ENCODE measurements at regions of chr4 and their contacts with region 1.

Region 1: GRCh38 chr4:17810260-17811077 is at the starts of genes DCAF16 and NCAPG:
- DNase-seq: peak; percentile 98 to 99
- H3K4me3 ChIP-seq: peak within 1 kb of the TSS; percentile 92 to 97
- H3K27ac ChIP-seq: peak within 1 kb of the TSS; percentile 97
- H3K4me1 ChIP-seq: peaks cover 50% of the 10 kb centered on the region
- H3K27me3 ChIP-seq: no peaks in the 10 kb centered on the region
- CTCF ChIP-seq: no peak
- POLR2A ChIP-seq: peak; percentile 60 to 94
- total RNA-seq, gene DCAF16: 26.5 TPM
- total RNA-seq, gene NCAPG: 1.5 TPM

Region 2: GRCh38 chr4:17915439-17915838 is 105.0 kb after region 1 on chr4:
- intact Hi-C with region 1: no loop called
- DNase-seq: no peak
- H3K4me3 ChIP-seq: no peak overlapping the region
- H3K27ac ChIP-seq: no peak overlapping the region
- H3K4me1 ChIP-seq: no peaks in the 10 kb centered on the region
- H3K27me3 ChIP-seq: no peaks in the 10 kb centered on the region
- CTCF ChIP-seq: no peak
- POLR2A ChIP-seq: no peak

Region 3: GRCh38 chr4:18021722-18022571 is 211.5 kb after region 1 on chr4 and contains the start of gene LCORL:
- intact Hi-C with region 1: loop called (anchors 5 kb)
- DNase-seq: peak in 1 of 2 donors; percentile 97
- H3K4me3 ChIP-seq: peak within 1 kb of the TSS; percentile 85 to 97
- H3K27ac ChIP-seq: peak within 1 kb of the TSS; percentile 92
- H3K4me1 ChIP-seq: peaks cover 10% of the 10 kb centered on the region
- H3K27me3 ChIP-seq: no peaks in the 10 kb centered on the region
- CTCF ChIP-seq: no peak
- POLR2A ChIP-seq: peak in 1 of 2 donors; percentile 39
- total RNA-seq, gene LCORL: 6.9 TPM